SK-N-SH (cell line): ENCODE measurements at regions of chr7 and their contacts with region 1.

Region 1: DNA sequence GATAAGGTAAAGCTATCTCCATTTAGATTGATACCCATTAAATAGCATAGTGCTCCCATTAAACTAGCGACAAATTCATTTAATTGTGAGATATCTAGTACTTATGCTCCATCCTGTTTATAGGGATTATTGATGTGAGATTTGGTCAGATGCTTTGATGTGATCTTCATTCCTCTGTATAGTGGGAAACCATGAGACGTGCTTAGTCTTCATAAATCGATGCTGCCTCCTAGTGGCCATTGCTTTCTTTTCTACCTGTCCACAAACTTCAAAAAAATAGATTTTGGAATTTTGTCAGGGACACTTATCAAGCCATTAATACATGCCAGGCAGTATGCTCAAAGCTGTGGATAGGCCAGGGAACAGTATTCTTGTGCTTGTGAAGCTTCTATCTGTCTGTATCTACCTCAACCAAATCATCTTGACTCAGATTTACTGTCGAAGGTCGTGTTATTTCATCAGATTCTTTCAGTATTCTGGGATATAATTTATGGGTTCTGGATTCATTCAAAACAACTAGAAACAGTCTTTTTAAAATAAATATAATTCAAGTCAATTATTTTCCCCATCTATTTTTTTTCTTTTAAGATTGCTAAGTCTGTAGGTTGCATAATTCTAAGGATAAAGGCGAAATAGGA is 12.0 kb downstream of the LSM8 start:
- DNase-seq: peak; percentile 54
- H3K4me3 ChIP-seq: no peak overlapping the region; a peak in 1 of 4 replicates
- H3K27ac ChIP-seq: no peak overlapping the region
- H3K4me1 ChIP-seq: no peaks in the 10 kb centered on the region
- H3K27me3 ChIP-seq: no peaks in the 10 kb centered on the region
- CTCF ChIP-seq: peak; percentile 97
- EP300 ChIP-seq: no peak
- RAD21 ChIP-seq: peak; percentile 78

Region 2: DNA sequence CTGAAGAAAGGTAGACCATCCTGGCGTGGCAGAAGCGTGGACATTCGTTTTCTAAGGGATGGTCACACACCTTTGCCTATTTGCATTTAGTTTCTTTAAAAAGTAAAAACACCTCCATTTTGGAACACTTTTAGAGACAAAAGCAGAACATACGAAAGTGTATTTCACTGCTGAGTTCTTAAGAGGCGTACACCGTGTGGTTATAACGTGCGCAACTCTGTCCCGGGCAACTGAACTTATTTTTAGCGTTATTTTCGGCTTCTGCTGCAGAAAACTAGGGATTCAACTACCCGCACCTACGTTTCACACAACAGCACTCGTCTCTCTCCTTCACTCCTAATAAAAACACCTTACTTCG is 12.5 kb before region 1 on chr7:
- CTCF ChIA-PET with region 1: interaction called, 14 read pairs
- POLR2A ChIA-PET with region 1: no interaction called
- DNase-seq: no peak
- H3K4me3 ChIP-seq: peak overlapping the region; percentile 95 to 98
- H3K27ac ChIP-seq: peak overlapping the region; percentile 81 to 96
- H3K4me1 ChIP-seq: peaks cover 5 to 17% of the 10 kb centered on the region in 2 experiments; a peak in 3 of 4 replicates
- H3K27me3 ChIP-seq: no peaks in the 10 kb centered on the region
- CTCF ChIP-seq: no peak
- EP300 ChIP-seq: no peak
- RAD21 ChIP-seq: no peak

Region 3: GRCh38 chr7:118214051-118214832 is 18.3 kb after region 1 on chr7:
- CTCF ChIA-PET with region 1: interaction called, 24 read pairs
- POLR2A ChIA-PET with region 1: no interaction called
- DNase-seq: peak; percentile 96
- H3K4me3 ChIP-seq: peak overlapping the region; percentile 72 to 80
- H3K27ac ChIP-seq: peak overlapping the region in 1 of 2 experiments; percentile 86; a peak in 2 of 4 replicates
- H3K4me1 ChIP-seq: peaks cover 0 to 7% of the 10 kb centered on the region in 2 experiments; a peak in 2 of 4 replicates
- H3K27me3 ChIP-seq: no peaks in the 10 kb centered on the region
- CTCF ChIP-seq: no peak
- EP300 ChIP-seq: no peak
- RAD21 ChIP-seq: no peak